AG04449 (cell line): ENCODE measurements at regions of chr2 and their contacts with region 1.

Region 1: GRCh38 chr2:158753641-158754611 is 41.2 kb upstream of the DAPL1 start:
- DNase-seq: peak; percentile 12
- H3K4me3 ChIP-seq: no peak overlapping the region
- CTCF ChIP-seq: peak; percentile 83

Region 2: DNA sequence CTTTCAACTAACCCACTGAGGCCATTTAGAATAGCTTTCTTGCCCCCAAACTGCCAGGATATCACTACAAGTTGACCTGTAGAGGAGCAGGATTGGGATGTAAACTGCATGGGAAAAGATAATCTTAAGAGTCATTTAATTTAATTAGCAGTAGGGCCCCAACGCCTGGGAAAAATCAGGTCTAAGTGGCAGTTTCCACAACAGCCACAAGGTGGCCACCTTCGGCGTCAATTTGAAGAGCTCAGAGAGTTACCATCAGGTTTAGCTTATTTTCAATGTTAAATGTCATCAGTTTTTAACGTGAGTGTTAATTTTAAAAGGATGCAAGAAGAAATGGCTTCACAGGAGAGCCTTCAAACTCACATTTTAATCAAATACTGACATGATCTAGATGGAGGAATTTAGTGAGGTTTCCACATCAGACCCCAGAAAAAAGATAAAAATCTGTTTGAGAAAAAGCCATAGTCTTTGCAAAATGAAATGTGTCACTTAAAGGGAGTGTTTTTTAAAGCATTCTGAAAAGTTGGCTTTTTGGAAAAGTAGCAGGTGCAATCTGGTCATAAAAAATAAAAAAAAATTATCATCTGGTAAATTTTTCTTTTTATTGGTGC is 729.5 kb before region 1 on chr2:
- CTCF ChIA-PET with region 1: interaction called, 310 read pairs
- POLR2A ChIA-PET with region 1: no interaction called
- DNase-seq: no peak
- H3K4me3 ChIP-seq: no peak overlapping the region
- CTCF ChIP-seq: peak; percentile 69

Region 3: GRCh38 chr2:158042245-158042644 is 711.7 kb before region 1 on chr2:
- CTCF ChIA-PET with region 1: interaction called, 322 read pairs
- POLR2A ChIA-PET with region 1: no interaction called
- DNase-seq: no peak
- H3K4me3 ChIP-seq: no peak overlapping the region
- CTCF ChIP-seq: no peak

Region 4: DNA sequence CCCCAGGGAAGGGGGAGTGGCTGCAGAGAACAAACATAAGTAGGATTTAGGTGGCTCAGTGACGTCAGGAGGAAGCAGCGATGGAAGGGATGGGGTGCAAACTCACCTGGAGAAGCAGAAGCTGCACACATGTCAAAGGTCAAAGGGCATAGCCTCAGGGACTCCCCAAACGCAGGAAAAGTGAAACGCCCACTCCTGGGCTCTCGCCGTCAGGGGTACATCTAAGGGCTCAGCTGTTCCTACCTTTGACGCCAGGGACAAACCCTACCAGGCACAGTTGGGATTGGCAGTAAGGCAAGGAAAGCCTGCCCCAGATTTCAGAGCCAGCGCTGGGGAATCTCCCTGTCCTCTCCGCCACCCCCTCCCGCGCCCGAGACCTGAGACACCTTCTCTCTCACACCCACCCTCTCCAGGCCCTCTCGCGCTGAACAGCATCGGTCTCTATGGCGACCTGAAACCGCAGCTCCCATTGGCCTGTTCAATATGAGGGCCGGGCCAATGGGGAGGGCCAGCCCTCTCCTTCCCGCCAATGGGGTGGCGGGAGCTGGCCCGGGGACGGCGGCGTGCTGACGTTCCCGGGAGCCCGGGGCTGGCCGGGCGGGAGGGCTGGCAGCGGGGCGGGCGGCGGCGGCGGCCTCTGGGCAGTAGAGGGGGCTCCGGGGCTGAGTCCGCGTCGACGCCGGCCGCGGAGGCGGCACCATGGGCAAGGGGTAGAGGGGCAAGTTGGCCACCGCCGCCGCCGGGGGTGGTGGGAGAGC is 297.4 kb before region 1 on chr2 and contains the starts of genes CCDC148 and PKP4:
- CTCF ChIA-PET with region 1: interaction called, 20 read pairs
- POLR2A ChIA-PET with region 1: no interaction called
- DNase-seq: peak; percentile 67
- H3K4me3 ChIP-seq: peak within 1 kb of the TSS; percentile 82
- CTCF ChIP-seq: peak; percentile 4

Region 5: GRCh38 chr2:158733430-158733755 is 20.5 kb before region 1 on chr2:
- CTCF ChIA-PET with region 1: interaction called, 37 read pairs
- POLR2A ChIA-PET with region 1: no interaction called
- DNase-seq: no peak
- H3K4me3 ChIP-seq: no peak overlapping the region
- CTCF ChIP-seq: no peak

Region 6: DNA sequence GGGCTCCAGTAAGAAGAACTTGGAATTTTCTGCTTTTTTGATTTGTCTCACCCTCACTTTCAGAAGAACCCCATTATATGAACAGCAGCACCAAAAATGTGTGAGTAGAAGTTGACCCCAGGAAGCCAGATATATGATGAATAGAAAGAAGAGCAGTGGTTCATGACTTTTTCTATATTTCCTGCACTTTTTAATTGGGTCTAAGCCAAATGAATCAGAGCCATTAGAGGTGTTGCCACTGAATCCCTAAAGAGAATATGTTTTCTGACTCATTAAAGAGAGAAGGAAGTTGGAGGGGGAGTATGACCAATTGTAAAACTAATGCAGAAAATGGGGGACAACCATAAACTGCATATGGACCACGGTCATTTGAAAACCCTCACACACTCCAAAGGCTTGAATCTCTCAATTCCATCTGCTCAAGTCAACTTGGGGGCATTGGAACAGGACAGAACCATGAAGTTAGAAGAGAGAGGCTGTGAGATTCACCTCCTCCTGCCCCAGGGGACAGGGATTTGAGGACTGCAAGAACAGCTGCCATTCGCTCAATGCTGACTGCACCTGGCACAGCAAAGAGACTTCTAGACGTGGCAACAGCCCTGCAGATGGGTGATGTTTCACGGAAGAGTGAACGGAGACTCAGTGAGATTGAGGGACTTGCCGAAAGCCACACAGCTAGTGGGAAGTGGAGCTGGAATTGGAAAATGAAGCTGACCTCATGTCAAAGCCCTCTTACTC is 44.2 kb after region 1 on chr2:
- CTCF ChIA-PET with region 1: no interaction called
- POLR2A ChIA-PET with region 1: no interaction called
- DNase-seq: no peak
- H3K4me3 ChIP-seq: no peak overlapping the region
- CTCF ChIP-seq: no peak